Activated naive CD4-positive, alpha-beta T cell treated with anti-CD3 and anti-CD28 coated beads for 36 hours (primary cell): ENCODE measurements at regions of chr14 and their contacts with region 1.

Region 1: DNA sequence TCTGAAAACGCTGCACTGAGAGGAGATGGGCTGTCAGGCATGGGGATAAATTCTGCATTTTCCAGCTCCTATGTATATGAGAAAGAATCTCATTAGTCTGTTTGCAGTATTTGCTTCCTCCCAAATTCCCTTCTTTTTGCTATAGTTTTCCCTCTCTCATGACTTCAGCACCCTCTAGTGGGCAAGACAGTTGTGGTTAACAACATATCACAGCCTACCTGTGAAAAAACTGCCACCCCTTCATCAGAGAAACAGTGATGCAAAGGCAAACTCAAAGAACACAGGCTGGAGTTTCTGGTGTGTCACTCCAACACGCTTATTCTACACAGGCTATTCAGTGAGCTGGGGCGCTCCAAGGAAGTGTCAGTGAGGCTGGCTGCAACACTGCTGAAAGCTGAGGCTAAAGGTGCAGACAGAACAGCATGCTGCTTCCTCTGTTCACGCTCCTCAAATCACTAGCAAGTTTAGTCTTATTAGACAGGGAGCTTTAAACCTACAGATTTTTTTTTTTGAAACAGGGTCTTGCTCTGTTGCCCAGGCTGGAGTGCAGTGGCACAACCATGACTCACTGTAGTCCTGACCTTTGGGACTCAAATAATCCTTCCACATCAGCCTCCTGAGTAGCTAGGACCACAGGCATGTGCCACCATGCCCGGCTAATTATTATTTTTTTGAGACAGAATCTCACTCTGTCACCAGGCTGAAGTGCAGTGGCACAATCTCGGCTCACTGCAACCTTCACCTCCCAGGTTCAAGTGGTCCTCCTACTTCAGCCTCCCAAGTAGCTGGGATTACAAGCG is 19.3 kb downstream of the ZC2HC1C start:
- DNase-seq: peak; percentile 62
- H3K4me3 Mint-ChIP-seq: no peak overlapping the region
- H3K27ac Mint-ChIP-seq: no peak overlapping the region
- H3K4me1 Mint-ChIP-seq: no peaks in the 10 kb centered on the region
- H3K27me3 Mint-ChIP-seq: no peaks in the 10 kb centered on the region

Region 2: GRCh38 chr14:74913986-74914573 is 174.7 kb before region 1 on chr14:
- CTCF ChIA-PET with region 1: interaction called, 6 read pairs
- intact Hi-C with region 1: loop called (anchors 1 kb)
- DNase-seq: peak; percentile 38
- H3K4me3 Mint-ChIP-seq: no peak overlapping the region
- H3K27ac Mint-ChIP-seq: no peak overlapping the region
- H3K4me1 Mint-ChIP-seq: no peaks in the 10 kb centered on the region
- H3K27me3 Mint-ChIP-seq: no peaks in the 10 kb centered on the region

Region 3: DNA sequence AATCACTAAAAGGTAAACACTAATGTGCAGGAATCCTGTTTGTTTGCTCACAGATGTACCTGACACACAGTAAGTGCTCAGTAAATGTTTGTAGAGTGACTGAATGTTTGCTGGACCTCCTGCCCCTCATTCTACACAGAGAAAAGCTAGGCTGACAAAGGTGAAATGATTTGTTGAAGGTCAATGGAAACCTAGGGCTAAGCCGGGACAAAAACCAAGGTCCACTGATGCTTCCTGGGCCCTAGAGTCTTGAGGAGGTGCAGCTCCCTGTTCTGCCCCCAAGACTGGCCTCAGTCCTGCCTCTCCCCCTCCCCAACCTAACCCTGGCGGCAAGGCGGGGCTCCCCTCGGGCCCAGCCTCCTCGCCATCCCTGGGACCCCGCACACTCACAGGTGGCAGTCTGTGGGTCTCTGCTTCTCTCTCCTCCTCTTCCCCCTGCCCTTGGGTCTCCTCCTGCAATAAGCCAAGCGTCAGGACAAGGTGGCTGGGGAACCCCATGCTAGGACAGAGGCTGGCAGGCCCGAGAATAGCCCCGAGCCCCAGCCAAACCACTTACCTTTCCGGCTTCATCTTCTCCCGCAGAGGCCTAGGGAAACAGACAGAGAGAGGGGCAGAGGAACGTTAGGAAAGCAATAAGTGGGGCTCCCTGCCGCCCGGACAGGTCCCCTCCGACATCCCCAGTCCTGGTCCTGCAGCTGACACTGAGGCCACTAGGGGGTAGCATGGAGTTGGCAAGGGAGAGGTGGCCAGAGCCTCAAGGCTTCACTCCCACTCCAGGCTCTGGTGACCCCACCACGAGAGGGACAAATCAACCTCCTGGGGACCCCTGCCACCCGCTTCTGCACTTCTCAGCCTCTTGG is 142.7 kb before region 1 on chr14:
- CTCF ChIA-PET with region 1: interaction called, 75 read pairs
- intact Hi-C with region 1: loop called (anchors 1 kb)
- DNase-seq: peak; percentile 87
- H3K4me3 Mint-ChIP-seq: peak overlapping the region; percentile 50
- H3K27ac Mint-ChIP-seq: peak overlapping the region; percentile 62
- H3K4me1 Mint-ChIP-seq: peaks cover 26% of the 10 kb centered on the region
- H3K27me3 Mint-ChIP-seq: peaks cover under 1% of the 10 kb centered on the region

Region 4: GRCh38 chr14:75063407-75064213 is 25.2 kb before region 1 on chr14 and contains the start of gene ACYP1:
- CTCF ChIA-PET with region 1: interaction called, 14 read pairs
- intact Hi-C with region 1: no loop called
- DNase-seq: peak; percentile 96
- H3K4me3 Mint-ChIP-seq: peak within 1 kb of the TSS; percentile 99
- H3K27ac Mint-ChIP-seq: peak within 1 kb of the TSS; percentile 94
- H3K4me1 Mint-ChIP-seq: peaks cover 23% of the 10 kb centered on the region
- H3K27me3 Mint-ChIP-seq: no peaks in the 10 kb centered on the region
- total RNA-seq, gene ACYP1: 46.3 to 50.5 TPM

Region 5: GRCh38 chr14:75077794-75078193 is 11.0 kb before region 1 on chr14:
- CTCF ChIA-PET with region 1: interaction called, 15 read pairs
- intact Hi-C with region 1: no loop called
- DNase-seq: no peak
- H3K4me3 Mint-ChIP-seq: no peak overlapping the region
- H3K27ac Mint-ChIP-seq: no peak overlapping the region
- H3K4me1 Mint-ChIP-seq: no peaks in the 10 kb centered on the region
- H3K27me3 Mint-ChIP-seq: no peaks in the 10 kb centered on the region